CD4-positive, alpha-beta memory T cell (primary cell): ENCODE measurements at regions of chr4 and their contacts with region 1.

Region 1: DNA sequence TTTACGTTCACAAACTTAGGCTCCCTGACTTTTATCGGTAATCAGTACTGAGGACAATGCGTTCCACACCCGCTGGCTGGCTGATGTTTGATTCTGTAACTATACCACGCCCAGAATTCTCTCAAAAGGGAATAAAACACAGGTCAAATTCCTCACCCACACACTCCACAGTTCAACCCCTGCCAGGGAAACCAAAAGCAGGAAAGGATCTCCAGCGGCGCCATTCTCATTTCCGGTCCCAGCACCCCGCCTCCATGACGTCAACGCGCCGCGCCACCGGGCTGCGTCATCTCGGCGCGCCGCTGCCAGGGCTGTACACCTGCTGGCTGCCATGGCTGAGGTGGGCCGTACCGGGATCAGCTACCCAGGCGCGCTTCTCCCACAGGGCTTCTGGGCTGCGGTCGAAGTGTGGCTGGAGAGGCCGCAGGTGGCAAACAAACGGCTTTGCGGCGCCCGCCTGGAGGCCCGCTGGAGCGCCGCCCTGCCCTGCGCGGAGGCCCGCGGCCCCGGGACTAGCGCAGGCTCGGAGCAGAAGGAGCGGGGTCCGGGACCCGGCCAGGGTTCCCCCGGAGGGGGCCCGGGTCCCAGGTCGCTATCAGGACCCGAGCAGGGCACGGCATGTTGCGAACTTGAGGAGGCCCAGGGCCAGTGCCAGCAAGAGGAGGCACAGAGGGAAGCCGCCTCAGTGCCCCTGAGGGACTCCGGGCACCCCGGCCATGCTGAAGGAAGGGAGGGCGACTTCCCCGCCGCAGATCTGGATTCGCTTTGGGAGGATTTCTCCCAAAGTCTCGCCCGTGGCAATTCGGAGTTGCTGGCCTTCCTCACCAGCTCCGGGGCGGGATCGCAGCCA is at the starts of genes ACOX3 and TRMT44:
- DNase-seq: peak; percentile 92 to 99 (median 95)
- H3K4me3 ChIP-seq: peak within 1 kb of the TSS; percentile 85 to 88
- H3K4me3 Mint-ChIP-seq: peak within 1 kb of the TSS; percentile 93 to 100 (median 99)
- H3K27ac ChIP-seq: peak within 1 kb of the TSS; percentile 91
- H3K27ac Mint-ChIP-seq: peak within 1 kb of the TSS; percentile 98 to 100 (median 99)
- H3K4me1 ChIP-seq: peaks cover 58% of the 10 kb centered on the region
- H3K4me1 Mint-ChIP-seq: peaks cover 52 to 84% (median 71%) of the 10 kb centered on the region in 4 donors
- H3K27me3 ChIP-seq: no peaks in the 10 kb centered on the region
- H3K27me3 Mint-ChIP-seq: no peaks in the 10 kb centered on the region
- total RNA-seq, gene ACOX3: 16.3 to 17.3 TPM
- total RNA-seq, gene TRMT44: 29.6 to 33.0 TPM

Region 2: GRCh38 chr4:8428293-8429097 is 12.2 kb before region 1 on chr4:
- CTCF ChIA-PET with region 1: interaction called, 10 read pairs
- POLR2A ChIA-PET with region 1: interaction called, 35 read pairs
- intact Hi-C with region 1: loop called (anchors 1 kb)
- DNase-seq: peak; percentile 84 to 96 (median 90)
- H3K4me3 ChIP-seq: peak overlapping the region; percentile 30 to 87
- H3K4me3 Mint-ChIP-seq: peak overlapping the region; percentile 93 to 98 (median 96)
- H3K27ac ChIP-seq: peak overlapping the region; percentile 66
- H3K27ac Mint-ChIP-seq: peak overlapping the region; percentile 92 to 97 (median 95)
- H3K4me1 ChIP-seq: peaks cover 22% of the 10 kb centered on the region
- H3K4me1 Mint-ChIP-seq: peaks cover 20 to 49% (median 29%) of the 10 kb centered on the region in 4 donors
- H3K27me3 ChIP-seq: no peaks in the 10 kb centered on the region
- H3K27me3 Mint-ChIP-seq: no peaks in the 10 kb centered on the region